ENCODE measurements at regions of chr6 and their contacts with region 1.

Region 1: DNA sequence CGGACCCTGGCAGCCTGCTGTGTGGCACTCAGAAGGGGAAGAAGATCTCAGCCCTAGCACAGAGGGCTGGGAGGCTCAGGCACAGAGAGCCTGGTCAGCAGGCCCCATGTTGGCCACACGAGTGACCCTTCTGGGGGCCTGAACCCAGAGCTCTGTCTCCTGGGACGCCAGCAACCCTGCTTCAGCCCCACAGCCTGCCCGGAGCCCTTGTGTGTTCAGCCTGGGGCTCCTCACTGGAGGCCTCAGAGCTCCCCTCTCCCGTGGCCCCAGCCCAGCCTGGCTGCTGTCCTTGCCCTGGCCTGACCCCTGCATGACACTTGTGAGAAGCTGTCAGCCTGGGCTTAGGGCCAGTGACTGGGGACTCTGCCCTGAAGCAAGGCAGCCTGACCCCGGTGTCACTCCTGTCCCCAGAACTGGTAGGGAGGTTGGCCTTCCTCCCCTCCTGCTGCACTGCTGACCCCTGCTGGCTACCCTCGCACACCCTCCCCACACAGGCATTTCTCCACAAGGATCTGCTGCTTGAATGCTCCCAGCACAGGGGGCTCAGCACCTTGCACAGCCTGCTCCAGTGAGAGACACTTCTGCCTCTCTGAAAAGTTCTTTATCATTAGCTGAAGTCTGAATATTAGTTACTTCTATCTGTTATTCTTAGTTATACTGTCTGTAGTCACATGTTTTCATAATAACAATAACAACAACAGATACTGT is 15.4 kb upstream of the IP6K3 start:
- DNase-seq: peak; percentile 71
- H3K4me3 ChIP-seq: no peak overlapping the region
- H3K27ac ChIP-seq: peak overlapping the region in 1 of 2 experiments; percentile 56; a peak in 2 of 4 replicates
- H3K4me1 ChIP-seq: peaks cover 0 to 19% of the 10 kb centered on the region in 2 experiments; a peak in 1 of 4 replicates
- H3K27me3 ChIP-seq: no peaks in the 10 kb centered on the region
- CTCF ChIP-seq: peak; percentile 59
- EP300 ChIP-seq: no peak
- RAD21 ChIP-seq: peak; percentile 72

Region 2: DNA sequence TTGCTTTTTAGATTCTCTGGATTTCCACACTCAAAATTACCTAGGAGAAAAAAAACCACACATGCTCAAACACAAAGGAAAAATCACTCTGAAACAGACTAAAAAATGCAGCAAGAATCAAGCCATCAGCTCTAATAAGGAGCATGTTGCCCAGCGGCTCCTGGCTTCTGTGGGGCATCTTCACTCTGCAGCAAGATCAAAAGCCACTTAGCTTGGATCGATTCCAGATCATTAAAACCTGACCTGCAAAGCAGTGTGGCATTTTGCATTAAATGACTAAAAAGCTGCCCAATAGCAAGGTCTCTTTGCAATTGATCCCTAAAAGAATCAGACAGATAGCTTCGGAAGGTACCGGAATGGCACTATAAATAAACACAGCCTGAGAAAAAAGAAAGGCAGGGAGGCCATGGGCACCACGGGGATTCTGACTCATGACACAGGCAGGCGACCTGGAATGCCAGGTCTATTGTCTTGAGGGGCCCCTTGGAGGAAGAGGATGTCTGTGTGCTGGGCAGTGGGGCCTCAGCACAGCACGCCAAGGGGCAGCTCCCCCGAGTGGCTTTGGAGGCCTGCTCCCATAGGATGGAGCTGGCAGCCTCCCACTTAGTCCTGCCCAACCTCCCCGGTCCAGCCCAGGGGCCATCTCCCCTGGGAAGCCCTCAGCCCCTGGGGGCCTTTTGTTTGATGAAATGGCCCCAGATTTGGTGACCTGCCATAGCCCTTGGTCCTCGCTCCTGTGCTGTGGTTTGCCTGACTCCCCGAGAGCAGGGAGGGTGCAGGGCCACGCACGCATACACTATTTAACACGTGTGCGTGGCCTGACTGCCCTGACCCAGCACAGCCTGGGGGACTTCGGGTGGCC is 19.3 kb after region 1 on chr6:
- CTCF ChIA-PET with region 1: interaction called, 63 read pairs
- POLR2A ChIA-PET with region 1: no interaction called
- DNase-seq: no peak
- H3K4me3 ChIP-seq: no peak overlapping the region
- H3K27ac ChIP-seq: peak overlapping the region; percentile 73 to 79
- H3K4me1 ChIP-seq: peaks cover 25 to 36% of the 10 kb centered on the region in 2 experiments
- H3K27me3 ChIP-seq: no peaks in the 10 kb centered on the region
- CTCF ChIP-seq: no peak
- EP300 ChIP-seq: peak in 1 of 2 experiments; percentile 62; a peak in 1 of 4 replicates
- RAD21 ChIP-seq: no peak

Region 3: DNA sequence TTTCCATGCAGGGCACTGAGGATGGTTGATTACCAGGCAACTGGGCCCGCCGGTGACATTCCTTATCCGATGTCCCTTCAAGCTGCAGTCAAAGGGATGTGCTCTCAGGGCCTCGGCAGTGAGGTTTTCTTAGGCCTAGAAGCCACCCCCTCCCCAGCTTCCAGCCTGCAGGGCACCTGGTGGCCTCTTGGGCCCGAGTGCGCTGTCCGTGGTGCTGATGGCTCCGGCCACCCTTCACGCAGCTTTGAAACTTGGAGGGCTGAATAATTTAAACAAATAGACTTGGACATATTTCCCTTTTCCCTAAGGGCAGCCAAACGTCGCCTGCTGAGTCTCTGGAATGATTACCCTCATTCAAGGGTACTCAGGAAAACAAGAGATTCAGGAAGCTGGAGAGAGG is 50.6 kb after region 1 on chr6:
- CTCF ChIA-PET with region 1: no interaction called
- POLR2A ChIA-PET with region 1: no interaction called
- DNase-seq: peak; percentile 64
- H3K4me3 ChIP-seq: no peak overlapping the region
- H3K27ac ChIP-seq: no peak overlapping the region
- H3K4me1 ChIP-seq: peaks cover 0 to 19% of the 10 kb centered on the region in 2 experiments; a peak in 2 of 4 replicates
- H3K27me3 ChIP-seq: peaks cover 21% of the 10 kb centered on the region; the same call in 1 of the 2 replicates
- CTCF ChIP-seq: peak; percentile 38
- EP300 ChIP-seq: no peak
- RAD21 ChIP-seq: no peak